ENCODE measurements at regions of chr5 and their contacts with region 1.

Region 1: DNA sequence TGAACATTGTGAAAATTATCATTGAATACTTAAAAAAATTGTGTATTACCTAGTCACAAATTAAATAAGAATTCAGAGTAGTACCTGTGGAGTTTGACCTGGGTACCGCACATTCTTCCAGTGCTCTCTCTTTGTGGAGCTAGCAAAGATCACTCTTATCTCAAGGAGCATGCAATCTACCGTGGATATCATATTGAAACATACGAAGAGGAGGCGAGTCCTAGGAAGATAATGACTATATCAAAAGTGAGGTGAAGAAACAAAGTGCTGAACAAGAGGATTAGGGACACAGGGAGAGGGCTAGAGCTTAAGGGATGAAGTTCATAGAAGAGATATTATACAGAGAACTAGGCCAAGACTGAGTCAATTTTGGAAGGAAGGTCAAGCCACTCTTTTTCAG is 55.9 kb upstream of the NR3C1 start:
- DNase-seq: no peak
- CTCF ChIP-seq: no peak

Region 2: DNA sequence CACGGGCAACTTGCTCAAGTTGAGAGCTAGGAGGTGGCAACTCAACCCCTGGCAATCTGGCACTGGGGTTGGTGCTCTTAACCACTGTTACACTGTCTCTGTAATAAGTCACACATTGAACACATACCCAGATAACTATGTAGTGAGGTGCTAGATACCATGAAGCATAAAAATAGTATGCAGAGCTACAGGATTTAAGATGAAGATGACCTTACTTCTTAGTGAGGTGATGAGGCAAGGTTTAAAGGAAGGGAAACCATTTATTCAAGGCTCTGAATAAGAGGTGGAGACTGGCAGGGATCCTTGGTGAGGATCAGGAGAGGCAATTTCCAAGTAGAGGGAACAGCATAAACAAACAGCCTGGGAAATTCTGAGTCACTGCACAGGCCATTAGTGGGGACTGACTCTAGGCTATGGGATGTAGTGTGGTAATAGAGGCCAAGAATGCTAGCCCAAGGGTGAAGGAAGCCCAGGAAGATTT is 11.6 kb after region 1 on chr5:
- CTCF ChIA-PET with region 1: interaction called, 16 read pairs
- POLR2A ChIA-PET with region 1: no interaction called
- DNase-seq: no peak
- CTCF ChIP-seq: no peak

Measured in GM10248 (cell line).